ENCODE measurements at regions of chr9 and their contacts with region 1.

Region 1: DNA sequence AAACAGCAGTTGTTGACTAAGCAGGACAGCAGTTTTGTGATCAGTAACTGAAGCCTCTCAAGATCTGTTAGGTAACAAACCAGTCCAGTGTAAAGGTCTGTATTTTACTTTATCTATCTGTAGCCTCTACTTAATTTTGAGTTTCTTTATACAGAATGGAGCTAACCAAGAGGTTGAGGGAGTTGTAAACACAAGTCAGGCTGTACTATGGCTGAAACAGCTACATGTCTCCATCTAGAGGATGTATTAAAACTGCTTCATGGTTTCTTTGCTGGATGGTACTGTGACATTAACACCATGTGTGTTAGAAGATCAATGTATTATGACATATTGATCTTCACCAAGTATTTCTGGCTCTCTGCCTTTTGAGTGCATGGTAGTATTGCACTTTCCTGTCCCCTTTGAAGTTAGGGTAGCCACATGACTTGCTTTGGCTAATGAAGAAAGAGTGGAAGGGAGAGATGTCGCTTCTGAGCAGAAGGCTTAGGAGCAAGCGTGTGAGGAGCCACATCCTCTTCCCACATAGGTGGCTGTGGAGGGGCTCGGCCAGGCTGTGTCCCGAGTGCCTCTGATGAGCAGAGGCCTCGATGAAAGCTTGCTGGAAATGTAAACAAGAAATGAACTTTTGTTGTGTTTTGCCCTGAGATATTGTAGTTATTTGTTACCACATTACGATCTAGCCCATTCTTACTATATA is 105.6 kb upstream of the PCA3 start:
- DNase-seq: peak in 1 of 2 experiments; percentile 38
- H3K4me3 ChIP-seq: no peak overlapping the region
- H3K27ac ChIP-seq: no peak overlapping the region
- H3K4me1 ChIP-seq: peaks cover 8% of the 10 kb centered on the region; the same call in 1 of the 2 replicates
- H3K27me3 ChIP-seq: no peaks in the 10 kb centered on the region
- CTCF ChIP-seq: peak; percentile 70

Region 2: DNA sequence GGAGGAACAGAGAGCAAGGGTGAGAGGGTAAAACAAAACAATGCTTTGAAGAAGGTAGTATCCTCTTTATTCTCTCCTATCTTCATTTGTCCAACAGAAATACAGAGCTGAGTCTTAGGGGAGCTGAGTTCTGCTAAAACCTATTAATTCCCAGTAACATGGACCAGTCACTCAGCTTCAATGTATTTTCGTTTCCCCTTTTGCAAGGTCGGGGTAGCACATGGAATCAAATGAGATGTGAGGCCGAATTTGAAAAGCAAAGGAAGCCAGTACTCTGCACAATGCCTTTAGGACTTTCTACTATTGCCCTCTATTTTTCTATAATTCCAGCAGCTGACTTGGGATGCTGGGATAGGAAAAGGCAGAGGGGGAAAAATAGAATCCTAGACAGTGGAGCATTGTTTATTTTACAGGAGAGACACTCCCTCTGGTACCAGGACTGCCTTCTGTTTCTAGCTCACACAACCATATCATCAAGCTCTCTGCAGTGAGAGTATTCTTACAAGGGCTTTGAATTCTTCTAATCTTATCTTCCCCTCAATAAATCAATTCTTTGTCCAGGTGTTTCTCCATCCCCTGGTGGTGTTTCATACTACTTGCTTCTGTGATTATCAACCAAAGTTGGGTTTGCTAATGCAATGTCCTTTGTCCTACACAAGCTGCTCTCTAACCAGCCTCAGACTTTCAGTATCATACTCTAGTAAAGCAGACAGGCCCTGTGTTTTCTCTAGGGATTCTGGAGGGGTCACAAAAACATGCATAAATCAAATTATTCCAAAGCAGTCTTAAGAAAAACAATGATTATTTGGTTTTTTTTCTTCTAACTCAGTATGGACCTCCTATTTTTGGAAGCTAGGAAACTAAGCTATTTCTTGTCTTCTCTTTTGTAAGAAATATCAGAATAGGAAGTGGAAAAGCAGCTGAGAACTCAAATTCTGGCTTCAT is 1228.9 kb before region 1 on chr9:
- CTCF ChIA-PET with region 1: no interaction called
- POLR2A ChIA-PET with region 1: no interaction called
- intact Hi-C with region 1: no loop called
- DNase-seq: no peak
- H3K4me3 ChIP-seq: no peak overlapping the region
- H3K27ac ChIP-seq: no peak overlapping the region
- H3K4me1 ChIP-seq: no peaks in the 10 kb centered on the region
- H3K27me3 ChIP-seq: peaks cover 5% of the 10 kb centered on the region; the same call in 1 of the 2 replicates
- CTCF ChIP-seq: no peak

Region 3: DNA sequence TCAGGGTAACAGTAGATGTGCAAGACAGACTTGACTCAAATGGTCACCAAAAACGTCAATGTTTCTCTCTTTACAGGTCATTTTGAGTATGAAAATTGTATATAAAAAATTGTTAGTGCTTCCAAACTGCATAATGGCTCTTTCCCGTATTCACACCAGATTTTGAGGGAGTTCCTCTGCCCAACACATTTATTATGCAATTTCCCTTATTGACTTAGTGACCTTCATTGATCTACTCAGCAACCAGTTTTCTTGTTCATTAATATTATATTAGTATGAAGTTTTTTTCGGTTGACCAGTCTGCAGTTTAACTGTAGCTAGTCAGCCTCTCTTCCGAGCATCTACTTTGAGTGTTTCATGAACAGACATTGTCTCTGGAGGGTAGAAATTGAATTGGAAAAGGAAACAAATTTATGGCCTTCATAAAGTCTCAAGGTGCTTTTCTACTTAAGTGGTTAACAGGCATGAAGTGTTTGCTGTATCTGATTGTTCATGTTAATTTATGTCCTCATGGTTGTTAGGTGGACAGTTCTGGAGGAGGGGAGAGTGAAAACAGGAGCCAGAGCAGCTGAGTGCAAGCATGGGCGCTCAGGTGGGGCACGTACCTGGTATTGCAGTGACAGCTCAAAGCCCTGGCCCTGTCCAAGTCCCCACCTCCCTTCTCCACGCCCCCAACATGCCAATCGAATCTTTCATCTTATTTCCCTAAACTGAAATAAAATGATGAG is 504.6 kb before region 1 on chr9:
- CTCF ChIA-PET with region 1: no interaction called
- POLR2A ChIA-PET with region 1: no interaction called
- intact Hi-C with region 1: no loop called
- DNase-seq: no peak
- H3K4me3 ChIP-seq: no peak overlapping the region
- H3K27ac ChIP-seq: no peak overlapping the region
- H3K4me1 ChIP-seq: no peaks in the 10 kb centered on the region
- H3K27me3 ChIP-seq: no peaks in the 10 kb centered on the region
- CTCF ChIP-seq: no peak

Region 4: DNA sequence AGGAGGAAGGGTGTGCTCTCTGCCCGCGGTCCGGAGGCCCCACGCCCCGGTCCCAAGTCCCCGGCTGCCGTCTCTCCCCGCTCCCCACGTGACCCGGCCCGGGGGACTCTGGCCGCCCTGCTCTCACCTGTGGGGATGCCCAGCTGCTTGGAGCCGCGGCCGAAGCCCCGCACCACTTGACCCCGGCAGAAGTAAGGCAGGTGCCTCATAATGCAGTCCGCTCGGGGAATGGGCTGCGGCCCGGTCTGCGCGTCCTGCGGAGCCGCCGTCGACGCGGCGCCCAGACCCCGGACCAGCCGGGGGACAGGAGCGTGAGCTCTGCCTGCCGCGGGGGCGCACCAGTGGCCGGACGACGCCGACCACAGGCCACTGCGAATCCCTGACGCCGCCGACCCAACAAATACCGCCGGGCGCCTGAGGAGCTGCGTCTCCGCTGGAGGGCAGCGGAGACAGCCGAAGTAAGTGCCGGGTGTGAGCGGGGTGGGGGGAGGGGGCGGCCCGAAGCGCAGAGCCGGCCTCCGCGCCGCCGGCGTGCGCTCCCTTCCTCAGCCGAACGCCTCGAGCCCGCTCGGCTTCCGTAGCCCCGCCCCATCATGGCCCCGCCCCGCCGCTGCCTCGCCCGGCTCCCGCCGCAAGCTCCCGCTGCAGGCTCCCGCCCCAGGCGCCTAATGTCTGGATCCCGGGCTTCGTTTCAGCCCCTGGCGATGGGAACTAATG is 264.6 kb before region 1 on chr9 and contains the start of gene RFK:
- CTCF ChIA-PET with region 1: no interaction called
- POLR2A ChIA-PET with region 1: interaction called, 5 read pairs
- intact Hi-C with region 1: loop called (anchors 5 kb)
- DNase-seq: peak; percentile 82 to 97
- H3K4me3 ChIP-seq: peak within 1 kb of the TSS; percentile 79
- H3K27ac ChIP-seq: peak within 1 kb of the TSS; percentile 85
- H3K4me1 ChIP-seq: peaks cover 22% of the 10 kb centered on the region
- H3K27me3 ChIP-seq: no peaks in the 10 kb centered on the region
- CTCF ChIP-seq: peak; percentile 53; the same call in 1 of the 2 replicates
- total RNA-seq, gene RFK: 20.6 and 24.4 TPM in 2 replicates

Region 5: DNA sequence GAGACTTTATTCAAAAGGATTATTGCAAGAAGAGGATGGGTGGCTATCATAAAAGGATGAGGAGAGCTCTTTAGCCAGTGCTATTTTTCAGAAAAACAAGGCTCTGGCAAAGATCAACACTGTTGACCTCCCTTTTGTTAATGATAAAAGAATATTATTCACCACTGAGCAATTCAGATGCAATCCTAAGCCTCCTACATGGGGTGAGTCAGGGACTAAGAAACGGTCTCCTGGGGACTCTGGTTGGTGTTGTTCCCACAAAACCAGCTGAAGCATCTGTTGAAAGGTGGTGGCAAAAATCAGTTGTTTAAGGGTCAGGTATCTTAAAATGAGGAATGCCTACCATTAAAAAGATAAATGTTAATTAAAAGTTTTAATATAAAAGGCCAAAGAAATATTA is 207.4 kb before region 1 on chr9:
- CTCF ChIA-PET with region 1: interaction called, 3 read pairs
- POLR2A ChIA-PET with region 1: interaction called, 5 read pairs
- intact Hi-C with region 1: loop called (anchors 1 kb)
- DNase-seq: no peak
- H3K4me3 ChIP-seq: no peak overlapping the region
- H3K27ac ChIP-seq: no peak overlapping the region
- H3K4me1 ChIP-seq: peaks cover 13% of the 10 kb centered on the region
- H3K27me3 ChIP-seq: no peaks in the 10 kb centered on the region
- CTCF ChIP-seq: no peak

Region 6: GRCh38 chr9:76576344-76576743 is 82.3 kb before region 1 on chr9:
- CTCF ChIA-PET with region 1: interaction called, 3 read pairs
- POLR2A ChIA-PET with region 1: interaction called, 3 read pairs
- intact Hi-C with region 1: loop called (anchors 10 kb)
- DNase-seq: no peak
- H3K4me3 ChIP-seq: peak overlapping the region; percentile 54; the same call in 1 of the 2 replicates
- H3K27ac ChIP-seq: peak overlapping the region; percentile 88; the same call in 1 of the 2 replicates
- H3K4me1 ChIP-seq: peaks cover 14% of the 10 kb centered on the region
- H3K27me3 ChIP-seq: no peaks in the 10 kb centered on the region
- CTCF ChIP-seq: no peak

Region 7: GRCh38 chr9:76987594-76988200 is 329.0 kb after region 1 on chr9:
- CTCF ChIA-PET with region 1: no interaction called
- POLR2A ChIA-PET with region 1: no interaction called
- intact Hi-C with region 1: loop called (anchors 5 kb)
- DNase-seq: peak in 1 of 2 experiments; percentile 21
- H3K4me3 ChIP-seq: no peak overlapping the region
- H3K27ac ChIP-seq: no peak overlapping the region
- H3K4me1 ChIP-seq: no peaks in the 10 kb centered on the region
- H3K27me3 ChIP-seq: peaks cover 35% of the 10 kb centered on the region
- CTCF ChIP-seq: peak; percentile 63

Region 8: GRCh38 chr9:78004478-78005229 is 1346.0 kb after region 1 on chr9:
- CTCF ChIA-PET with region 1: no interaction called
- POLR2A ChIA-PET with region 1: no interaction called
- intact Hi-C with region 1: no loop called
- DNase-seq: peak in 1 of 2 experiments; percentile 68
- H3K4me3 ChIP-seq: no peak overlapping the region
- H3K27ac ChIP-seq: no peak overlapping the region
- H3K4me1 ChIP-seq: peaks cover 4% of the 10 kb centered on the region; the same call in 1 of the 2 replicates
- H3K27me3 ChIP-seq: no peaks in the 10 kb centered on the region
- CTCF ChIP-seq: peak; percentile 51